A673 (cell line): ENCODE measurements at regions of chr5 and their contacts with region 1.

Region 1: DNA sequence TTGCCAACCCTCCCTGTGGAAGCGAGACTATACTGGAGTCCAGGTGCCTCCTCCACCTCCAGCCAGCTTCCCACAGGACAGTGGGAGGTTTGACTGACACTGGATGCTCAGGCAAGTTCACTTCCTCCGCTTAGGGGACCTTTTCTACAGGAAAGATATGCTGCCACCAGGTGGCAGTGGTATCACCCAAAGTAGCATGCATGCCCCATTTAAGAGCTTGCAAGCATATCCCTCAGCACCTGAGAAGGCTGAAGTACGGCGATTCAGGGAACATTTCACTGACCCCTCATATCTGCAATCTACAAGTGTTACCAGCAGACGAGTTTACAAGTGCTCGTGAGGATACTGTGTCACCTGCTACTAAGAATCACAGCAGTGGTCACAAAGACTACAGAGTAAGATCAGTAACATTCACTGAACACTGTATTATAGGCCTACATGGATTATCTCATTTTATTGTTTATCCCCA is 75.5 kb downstream of the KLHL3 start:
- DNase-seq: peak; percentile 72
- H3K4me3 ChIP-seq: no peak overlapping the region
- H3K27ac ChIP-seq: no peak overlapping the region
- H3K4me1 ChIP-seq: no peaks in the 10 kb centered on the region
- H3K27me3 ChIP-seq: peaks cover under 1% of the 10 kb centered on the region
- CTCF ChIP-seq: peak; percentile 81

Region 2: DNA sequence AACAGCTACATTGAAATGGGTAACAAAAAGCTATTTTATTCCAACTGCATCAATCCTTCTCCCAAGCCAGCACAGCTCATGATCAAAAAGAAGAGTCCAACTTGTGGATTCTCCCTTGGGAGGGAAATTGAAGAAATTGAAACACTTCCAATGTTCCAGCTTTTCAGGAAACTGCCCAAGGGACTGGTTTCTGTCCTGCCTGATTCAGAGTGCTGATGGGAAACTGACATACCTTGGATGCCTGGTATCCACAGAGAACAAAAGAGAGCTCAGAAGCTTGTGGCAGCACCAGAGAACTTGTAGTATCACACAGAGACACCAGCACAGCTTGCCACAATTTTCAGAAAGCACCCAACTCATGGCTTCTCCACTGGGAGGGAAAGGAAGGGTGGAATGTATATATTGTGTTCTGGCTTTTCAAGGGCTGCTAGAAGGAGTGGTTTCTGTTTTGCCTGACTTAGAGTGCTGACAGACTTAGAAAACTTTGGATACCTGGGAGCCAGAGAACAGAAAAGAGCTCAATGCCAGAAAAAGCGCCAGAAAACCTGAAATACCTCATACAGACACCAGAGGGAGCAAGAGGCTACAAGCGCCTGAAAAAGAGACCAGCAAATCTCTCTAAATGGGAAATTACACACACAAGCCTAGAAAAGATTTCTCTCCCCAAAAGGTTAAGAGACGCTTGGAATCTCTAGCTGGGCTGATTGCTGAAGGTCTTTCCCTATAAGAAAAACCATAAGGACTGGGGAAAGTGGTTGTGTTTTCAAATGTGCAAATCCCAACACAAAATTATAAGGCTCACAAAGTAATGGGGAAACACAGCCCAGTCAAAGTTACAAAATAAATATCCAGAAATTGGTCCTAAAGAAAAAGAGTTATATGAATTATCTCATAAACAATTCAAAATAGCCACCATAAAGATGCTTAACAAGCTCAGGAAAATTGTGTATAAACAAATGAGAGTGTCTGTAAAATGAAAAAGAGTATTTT is 340.0 kb before region 1 on chr5:
- CTCF ChIA-PET with region 1: interaction called, 15 read pairs
- POLR2A ChIA-PET with region 1: no interaction called
- intact Hi-C with region 1: no loop called
- DNase-seq: peak; percentile 69
- H3K4me3 ChIP-seq: no peak overlapping the region
- H3K27ac ChIP-seq: no peak overlapping the region
- H3K4me1 ChIP-seq: no peaks in the 10 kb centered on the region
- H3K27me3 ChIP-seq: peaks cover 14% of the 10 kb centered on the region
- CTCF ChIP-seq: peak; percentile 76

Region 3: DNA sequence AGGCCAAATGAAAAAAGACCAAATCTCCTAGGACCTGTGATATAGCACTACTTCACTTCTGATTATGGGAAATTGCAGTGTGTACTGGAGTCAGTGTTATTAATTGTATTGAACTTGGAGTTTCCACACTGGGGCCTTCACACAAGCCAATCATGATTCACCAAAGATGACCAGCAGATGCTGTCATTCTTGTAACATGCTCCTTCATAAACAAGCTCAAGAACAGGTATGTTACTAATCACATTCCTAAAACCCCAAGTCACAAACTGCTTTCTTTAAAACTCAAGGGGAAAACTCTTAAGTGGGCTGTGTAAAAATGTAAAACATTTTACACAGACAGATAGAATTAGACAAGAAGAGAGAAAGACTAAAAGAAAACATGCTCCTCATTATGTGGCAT is 70.0 kb after region 1 on chr5:
- CTCF ChIA-PET with region 1: no interaction called
- POLR2A ChIA-PET with region 1: no interaction called
- intact Hi-C with region 1: loop called (anchors 5 kb)
- DNase-seq: no peak
- H3K4me3 ChIP-seq: no peak overlapping the region
- H3K27ac ChIP-seq: no peak overlapping the region
- H3K4me1 ChIP-seq: no peaks in the 10 kb centered on the region
- H3K27me3 ChIP-seq: peaks cover 3% of the 10 kb centered on the region
- CTCF ChIP-seq: no peak

Region 4: DNA sequence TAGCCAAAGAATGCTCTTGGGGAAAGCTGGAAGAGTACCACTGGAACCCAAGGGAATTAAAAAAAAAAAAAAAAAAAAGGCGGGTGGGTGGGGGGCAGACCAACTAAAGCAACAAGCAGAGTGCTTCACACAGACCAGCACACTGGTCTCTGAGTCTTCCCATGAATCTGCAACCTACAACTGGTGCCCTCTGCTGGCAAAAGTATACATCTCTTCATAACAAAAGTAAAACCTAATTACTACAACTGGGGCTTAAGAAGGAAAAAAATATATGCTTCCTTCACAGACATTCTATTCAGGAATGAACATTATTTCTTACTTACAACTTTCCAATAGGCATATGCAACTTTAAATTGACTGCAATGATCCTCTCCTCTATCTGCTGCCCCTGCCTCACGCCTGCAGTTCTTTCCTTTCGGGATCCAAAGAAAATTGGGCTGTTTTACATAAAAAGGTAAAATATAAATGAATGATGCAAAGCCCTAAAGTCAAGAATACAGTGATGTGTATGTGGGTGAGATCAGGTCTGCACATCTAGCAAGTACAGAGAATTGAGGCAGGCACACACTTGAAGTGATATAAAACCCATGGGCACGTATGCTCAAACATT is 82.8 kb after region 1 on chr5:
- CTCF ChIA-PET with region 1: interaction called, 15 read pairs
- POLR2A ChIA-PET with region 1: no interaction called
- intact Hi-C with region 1: loop called (anchors 1 kb)
- DNase-seq: peak; percentile 87
- H3K4me3 ChIP-seq: no peak overlapping the region
- H3K27ac ChIP-seq: no peak overlapping the region
- H3K4me1 ChIP-seq: no peaks in the 10 kb centered on the region
- H3K27me3 ChIP-seq: no peaks in the 10 kb centered on the region
- CTCF ChIP-seq: peak; percentile 70

Region 5: DNA sequence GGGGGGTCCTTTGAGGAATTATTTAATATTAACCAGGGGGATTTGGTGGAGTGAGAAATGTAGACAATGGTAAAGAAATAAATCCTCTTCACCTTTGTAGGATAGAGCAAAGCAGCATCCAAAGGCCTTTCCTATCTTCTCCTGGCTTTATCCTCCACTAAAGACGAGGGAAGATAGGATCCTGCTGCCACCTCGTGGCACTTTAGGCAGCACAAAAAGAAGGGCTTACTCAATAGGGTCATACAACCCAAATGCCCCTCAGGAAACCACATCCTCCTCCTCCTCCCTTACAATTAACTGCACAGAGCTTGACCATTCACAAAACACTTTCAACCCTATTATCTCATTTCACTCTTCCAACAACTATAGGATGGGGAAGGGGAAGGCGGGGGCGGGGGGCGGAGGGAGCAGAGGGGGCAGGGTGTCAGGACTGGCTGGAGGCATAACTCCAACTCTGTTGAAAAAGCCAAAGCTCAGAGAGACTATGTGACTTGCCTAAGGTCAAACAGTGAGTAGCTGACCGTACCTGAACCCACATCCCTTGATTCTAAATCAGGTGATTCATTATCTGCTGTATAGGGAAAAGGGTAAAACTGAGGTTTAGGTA is 161.9 kb after region 1 on chr5:
- CTCF ChIA-PET with region 1: no interaction called
- POLR2A ChIA-PET with region 1: no interaction called
- intact Hi-C with region 1: loop called (anchors 2 kb)
- DNase-seq: peak; percentile 60
- H3K4me3 ChIP-seq: no peak overlapping the region
- H3K27ac ChIP-seq: no peak overlapping the region
- H3K4me1 ChIP-seq: no peaks in the 10 kb centered on the region
- H3K27me3 ChIP-seq: peaks cover 4% of the 10 kb centered on the region
- CTCF ChIP-seq: peak; percentile 61

Region 6: GRCh38 chr5:138138949-138139780 is 478.8 kb after region 1 on chr5 and contains the start of gene NME5:
- CTCF ChIA-PET with region 1: no interaction called
- POLR2A ChIA-PET with region 1: no interaction called
- intact Hi-C with region 1: loop called (anchors 10 kb)
- DNase-seq: peak; percentile 30
- H3K4me3 ChIP-seq: peak within 1 kb of the TSS; percentile 32
- H3K27ac ChIP-seq: no peak within 1 kb of the TSS
- H3K4me1 ChIP-seq: no peaks in the 10 kb centered on the region
- H3K27me3 ChIP-seq: no peaks in the 10 kb centered on the region
- CTCF ChIP-seq: no peak
- total RNA-seq, gene NME5: 0.72 TPM in 1 of 2 replicates, not detected in the other